Heart left ventricle (tissue), 16 donors: ENCODE measurements at regions of chr5 and their contacts with region 1.

Region 1: DNA sequence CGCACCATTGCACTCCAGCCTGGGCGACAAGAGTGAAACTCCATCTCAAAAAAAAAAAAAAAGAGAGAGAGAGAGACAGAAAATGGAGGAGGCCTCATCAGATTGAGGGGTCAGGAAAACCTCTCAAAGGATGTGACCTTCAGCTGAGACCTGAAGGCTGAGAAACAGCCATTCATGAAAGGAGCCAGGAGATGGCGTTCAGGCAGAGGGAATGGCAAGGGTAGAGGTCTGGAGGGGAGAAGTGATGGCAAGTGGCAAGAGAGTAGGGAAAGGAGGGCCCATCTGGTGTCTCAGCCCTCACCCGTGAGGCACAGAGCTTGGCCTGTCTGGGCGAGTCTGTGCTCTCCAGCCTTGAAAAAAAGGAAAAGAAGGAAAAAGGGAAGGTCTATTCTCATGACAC is 17.0 kb downstream of the CAMK2A start:
- DNase-seq: no peak
- ATAC-seq: peak in 2 of 4 donors; percentile 25 to 57
- H3K4me3 ChIP-seq: no peak overlapping the region
- H3K27ac ChIP-seq: no peak overlapping the region
- H3K4me1 ChIP-seq: no peaks in the 10 kb centered on the region
- H3K27me3 ChIP-seq: no peaks in the 10 kb centered on the region
- CTCF ChIP-seq: peak in 5 of 12 donors; percentile 10 to 40 (median 27)
- POLR2A ChIP-seq: no peak

Region 2: DNA sequence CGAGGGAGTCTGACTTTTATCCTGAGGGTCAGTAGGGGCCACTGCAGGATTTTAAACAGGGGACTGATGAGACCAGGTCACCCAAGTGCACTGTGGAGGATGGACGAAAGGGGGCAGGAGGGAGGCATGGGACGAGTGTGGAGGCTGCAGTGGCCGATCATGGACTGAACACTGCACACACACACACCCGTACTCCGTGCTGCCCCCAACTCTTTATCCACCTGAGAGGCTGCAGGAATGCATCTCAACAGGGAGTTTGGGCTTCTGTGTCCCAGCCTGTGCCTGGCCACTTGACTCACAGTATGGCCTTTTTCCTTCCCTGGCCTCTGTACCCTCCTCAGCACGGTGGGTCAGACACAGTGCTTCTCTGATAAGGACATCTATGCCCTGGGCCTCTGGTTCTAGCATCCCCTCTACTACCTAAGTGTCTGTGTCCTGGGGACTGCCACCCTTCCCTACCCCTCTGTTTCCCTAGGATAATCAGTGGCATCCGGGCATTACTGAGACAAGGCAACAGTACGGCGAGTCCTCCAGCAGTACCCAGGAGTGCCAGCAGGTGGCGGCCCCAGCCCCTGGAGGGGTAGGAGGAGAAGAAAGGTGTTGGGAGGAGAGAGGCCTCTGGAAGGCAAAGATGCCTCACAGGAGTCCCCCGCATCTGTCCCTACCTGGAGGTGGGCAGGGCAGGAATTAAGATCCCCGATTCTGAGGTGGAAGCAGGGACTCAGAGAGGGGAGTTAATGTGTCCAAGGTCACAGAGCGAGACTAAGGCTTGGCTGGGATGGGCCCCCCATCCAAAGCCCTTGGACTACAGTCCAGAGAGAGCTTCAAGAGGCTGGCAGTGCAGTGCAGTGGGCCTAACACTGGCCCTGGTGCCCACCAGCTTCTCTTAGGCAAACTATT is 111.0 kb before region 1 on chr5:
- intact Hi-C with region 1: no loop called
- DNase-seq: peak; percentile 82 to 91 (median 83)
- ATAC-seq: peak; percentile 41 to 70 (median 56)
- H3K4me3 ChIP-seq: no peak overlapping the region
- H3K27ac ChIP-seq: peak overlapping the region in 11 of 12 donors; percentile 37 to 96 (median 84)
- H3K4me1 ChIP-seq: peaks cover 0 to 85% (median 58%) of the 10 kb centered on the region in 12 donors
- H3K27me3 ChIP-seq: peaks cover 0 to 4% (median 0%) of the 10 kb centered on the region in 9 donors
- CTCF ChIP-seq: peak; percentile 83 to 95 (median 91)
- POLR2A ChIP-seq: no peak

Region 3: DNA sequence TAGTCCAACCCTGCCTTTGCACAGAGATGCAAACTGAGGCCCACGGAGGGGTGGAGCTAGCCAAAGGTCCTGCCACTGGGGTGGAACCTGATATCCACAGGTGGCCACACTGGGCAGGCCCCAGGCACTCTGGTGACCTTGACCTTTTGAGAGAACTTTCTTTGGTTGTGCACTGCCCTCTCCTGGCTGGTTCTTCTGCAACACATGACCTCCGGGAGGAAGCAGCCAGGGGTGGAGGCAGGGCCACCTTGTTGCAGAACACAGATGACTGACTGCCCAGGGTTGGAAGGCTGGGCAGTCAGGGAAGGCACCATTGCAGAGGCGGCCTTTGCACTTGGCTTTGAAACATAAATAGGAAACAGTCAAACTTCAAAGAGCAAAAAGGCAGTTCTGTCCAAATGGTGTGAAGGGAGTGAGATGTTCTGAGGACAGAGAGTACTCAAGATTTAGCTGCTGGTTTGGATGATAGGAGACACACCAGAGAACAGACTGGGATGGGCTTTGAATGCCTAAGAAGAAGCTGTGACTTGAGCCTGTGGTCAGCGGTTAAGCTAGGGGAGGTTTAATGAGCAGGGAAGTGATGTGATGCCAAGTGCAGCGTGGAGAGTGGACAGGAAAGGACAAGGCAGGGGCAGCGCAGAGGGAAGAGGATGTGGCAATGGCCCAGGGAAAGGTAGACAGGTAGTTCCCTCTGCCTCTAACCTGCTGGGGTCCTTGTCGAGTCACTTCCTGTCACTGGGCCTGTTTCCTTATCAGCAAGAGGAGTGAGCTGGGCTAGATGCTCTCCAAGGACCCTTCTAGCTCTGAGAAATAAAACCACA is 78.2 kb after region 1 on chr5:
- intact Hi-C with region 1: loop called in 1 of 10 experiments (anchors 5 kb)
- DNase-seq: peak; percentile 67 to 79 (median 77)
- ATAC-seq: peak; percentile 83 to 93 (median 92)
- H3K4me3 ChIP-seq: no peak overlapping the region
- H3K27ac ChIP-seq: no peak overlapping the region
- H3K4me1 ChIP-seq: peaks cover 0 to 21% (median 0%) of the 10 kb centered on the region in 12 donors
- H3K27me3 ChIP-seq: no peaks in the 10 kb centered on the region
- CTCF ChIP-seq: peak; percentile 31 to 74 (median 55)
- POLR2A ChIP-seq: no peak

Region 4: GRCh38 chr5:150469718-150470469 is 197.4 kb after region 1 on chr5:
- intact Hi-C with region 1: no loop called
- DNase-seq: no peak
- ATAC-seq: no peak
- H3K4me3 ChIP-seq: no peak overlapping the region
- H3K27ac ChIP-seq: no peak overlapping the region
- H3K4me1 ChIP-seq: peaks cover 0 to 23% (median 8%) of the 10 kb centered on the region in 12 donors
- H3K27me3 ChIP-seq: no peaks in the 10 kb centered on the region
- CTCF ChIP-seq: no peak
- POLR2A ChIP-seq: no peak